Lower leg skin (tissue), 4 donors: ENCODE measurements at regions of chr3 and their contacts with region 1.

Region 1: DNA sequence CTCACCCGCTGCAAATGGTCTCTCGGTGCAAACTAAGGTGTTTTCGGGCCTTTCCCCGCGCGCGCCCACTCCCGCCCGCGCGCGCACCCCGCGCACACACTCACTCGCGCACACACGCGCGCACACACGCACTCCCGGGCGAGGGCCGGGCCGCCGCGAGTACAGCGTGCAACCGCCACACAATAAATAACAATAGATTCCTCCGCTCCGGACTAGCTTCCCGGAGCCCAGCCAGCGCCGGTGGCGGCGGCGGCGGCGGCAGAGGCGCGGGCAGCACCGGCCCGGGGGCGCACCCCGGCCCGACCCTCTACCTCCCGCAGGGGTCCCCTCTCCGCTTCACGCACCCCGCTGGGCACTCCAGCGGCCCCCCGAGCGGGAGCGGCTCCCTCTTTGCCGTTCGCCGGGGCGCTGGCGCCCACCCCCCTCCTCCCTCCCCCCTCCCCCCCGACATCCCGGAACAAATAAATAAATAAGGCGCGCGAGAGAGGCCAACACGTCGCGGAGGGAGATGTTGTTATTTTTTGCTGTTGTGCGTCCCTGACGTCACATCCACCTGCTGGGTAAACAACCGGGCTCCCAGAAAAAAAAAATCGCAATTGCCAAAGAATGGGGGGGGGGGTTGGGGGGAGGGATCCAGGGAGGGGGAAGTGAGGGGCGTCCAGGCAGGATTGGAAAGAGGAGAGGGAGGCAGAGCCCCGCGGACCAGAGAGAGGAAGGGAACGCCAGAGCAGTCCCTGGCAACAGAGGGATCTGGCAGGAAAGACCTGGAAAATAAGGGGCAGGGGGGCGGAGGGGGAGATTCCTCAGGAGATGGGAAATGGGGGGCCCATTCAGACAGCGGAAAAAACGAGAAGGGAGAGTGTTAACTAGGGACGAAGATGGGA is at the start of gene FOXP1:
- DNase-seq: peak; percentile 61 to 93
- H3K4me3 ChIP-seq: peak within 1 kb of the TSS; percentile 77
- CTCF ChIP-seq: no peak
- POLR2A ChIP-seq: no peak
- total RNA-seq, gene FOXP1: 46.6 to 66.6 (median 55.2) TPM

Region 2: DNA sequence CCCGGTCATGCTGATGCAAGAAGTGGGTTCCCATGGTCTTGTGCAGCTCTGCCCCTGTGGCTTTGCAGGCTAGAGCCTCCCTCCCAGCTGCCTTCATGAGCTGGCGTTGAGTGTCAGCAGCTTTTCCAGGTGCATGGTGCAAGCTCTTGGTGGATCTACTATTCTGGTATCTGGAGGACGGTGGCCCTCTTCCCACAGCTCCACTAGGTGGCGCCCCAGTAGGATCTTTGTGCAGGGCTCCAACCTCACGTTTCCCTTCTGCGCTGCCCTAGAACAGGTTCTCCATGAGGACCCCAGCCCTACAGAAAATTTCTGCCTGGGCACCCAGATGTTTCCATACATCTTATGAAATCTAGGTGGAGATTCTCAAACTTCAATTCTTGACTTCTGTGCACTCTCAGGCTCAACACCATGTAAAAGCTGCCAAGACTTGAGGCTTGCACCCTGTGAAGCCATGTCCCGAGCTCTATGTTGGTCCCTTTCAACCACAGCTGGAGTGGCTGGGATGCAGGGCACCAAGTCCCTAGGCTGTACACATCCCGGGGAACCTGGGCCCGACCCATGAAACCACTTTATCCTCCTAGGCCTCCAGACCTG is 1033.0 kb before region 1 on chr3:
- intact Hi-C with region 1: loop called (anchors 10 kb)
- DNase-seq: peak; percentile 60 to 93
- H3K4me3 ChIP-seq: no peak overlapping the region
- CTCF ChIP-seq: no peak
- POLR2A ChIP-seq: no peak

Region 3: DNA sequence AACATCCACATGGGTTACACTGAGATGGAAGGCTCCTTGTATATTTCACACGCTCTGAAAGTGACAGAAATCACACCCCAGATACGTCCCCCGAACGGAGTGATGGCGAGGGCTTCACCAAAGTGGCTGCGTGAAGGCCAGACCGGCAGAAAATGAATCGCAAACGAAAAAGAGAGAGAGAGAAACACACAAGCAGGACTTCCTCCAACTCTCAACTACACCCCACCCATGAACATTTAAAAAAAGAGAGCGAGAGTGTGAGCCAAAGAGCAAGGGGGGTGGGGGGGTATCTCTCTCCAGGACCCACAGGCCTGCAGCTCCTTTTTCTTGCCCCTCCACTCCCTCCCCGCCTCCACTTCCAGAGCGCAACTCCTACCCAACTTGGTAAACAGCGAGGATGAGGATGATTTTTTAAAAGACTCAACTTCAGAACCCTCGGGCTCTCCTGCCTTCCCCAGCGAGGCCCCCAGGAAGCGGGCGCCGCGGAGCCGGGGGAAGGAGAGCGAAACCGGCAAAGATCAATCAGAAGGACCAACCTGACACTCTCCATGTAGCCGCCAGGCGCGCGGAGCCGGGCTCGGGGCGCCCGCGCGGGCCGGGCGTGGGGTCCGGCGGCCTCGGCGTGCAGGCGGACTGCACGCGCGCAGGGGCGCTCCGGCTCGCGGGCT is 519.4 kb before region 1 on chr3:
- intact Hi-C with region 1: loop called (anchors 10 kb)
- DNase-seq: no peak
- H3K4me3 ChIP-seq: peak overlapping the region; percentile 56
- CTCF ChIP-seq: no peak
- POLR2A ChIP-seq: no peak

Region 4: DNA sequence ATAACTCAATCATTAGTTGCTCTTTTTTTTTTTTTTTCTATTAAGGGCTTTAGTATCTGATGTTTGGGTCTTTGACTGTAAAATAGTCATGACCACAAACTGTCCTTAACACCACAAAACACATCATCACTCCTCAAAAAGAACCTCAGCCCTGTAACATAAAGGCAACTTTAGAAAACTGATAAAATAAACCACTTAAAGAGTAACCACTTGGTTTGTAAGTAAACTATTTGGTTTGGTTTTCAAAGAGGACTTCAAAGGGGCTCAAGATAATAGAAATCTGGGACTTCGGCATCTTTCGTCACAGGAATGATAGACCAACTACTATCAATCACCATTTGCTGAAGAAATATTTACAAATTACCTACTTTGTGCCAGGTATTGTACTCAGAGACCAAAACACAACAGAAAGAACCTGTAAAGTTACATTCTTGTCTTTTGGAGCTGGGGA is 168.1 kb before region 1 on chr3:
- intact Hi-C with region 1: no loop called
- DNase-seq: no peak
- H3K4me3 ChIP-seq: no peak overlapping the region
- CTCF ChIP-seq: no peak
- POLR2A ChIP-seq: no peak

Region 5: GRCh38 chr3:71444028-71444860 is 139.6 kb before region 1 on chr3:
- intact Hi-C with region 1: loop called (anchors 10 kb)
- DNase-seq: peak in 1 of 2 donors; percentile 69
- H3K4me3 ChIP-seq: no peak overlapping the region
- CTCF ChIP-seq: no peak
- POLR2A ChIP-seq: no peak

Region 6: DNA sequence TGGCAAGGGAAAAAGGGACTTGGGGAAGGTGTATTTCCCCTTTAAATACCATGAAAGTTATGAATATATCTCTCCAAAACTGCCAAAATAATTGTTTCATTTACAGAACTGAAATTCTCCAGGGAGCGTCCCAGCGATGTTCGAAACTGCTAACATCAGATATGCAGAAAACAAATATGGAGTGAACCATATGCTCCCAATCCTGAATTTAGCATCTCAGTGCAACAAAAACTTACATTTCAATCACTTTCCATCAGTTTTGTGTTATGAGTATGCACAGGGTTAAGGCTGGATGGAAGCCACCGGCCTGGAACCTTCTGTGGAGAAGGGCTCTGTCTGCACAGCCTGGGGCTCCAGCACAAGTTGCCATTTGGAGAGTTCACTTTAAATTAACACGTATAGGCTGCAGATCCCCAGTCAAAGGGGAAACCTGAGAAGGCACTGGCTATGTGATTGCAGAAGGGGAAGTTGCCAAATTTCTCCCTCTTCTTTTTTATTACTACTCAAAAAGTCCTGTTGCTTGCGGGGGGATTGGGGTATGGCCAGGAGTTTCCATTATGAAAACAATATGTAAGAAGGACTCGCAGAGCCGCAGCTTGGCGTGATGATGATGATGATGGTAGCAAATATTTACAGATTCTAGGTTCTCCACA is 56.6 kb after region 1 on chr3:
- intact Hi-C with region 1: no loop called
- DNase-seq: peak in 1 of 2 donors; percentile 20
- H3K4me3 ChIP-seq: no peak overlapping the region
- CTCF ChIP-seq: no peak
- POLR2A ChIP-seq: no peak

Region 7: GRCh38 chr3:71690341-71690841 is 106.6 kb after region 1 on chr3:
- intact Hi-C with region 1: no loop called
- DNase-seq: no peak
- H3K4me3 ChIP-seq: no peak overlapping the region
- CTCF ChIP-seq: no peak
- POLR2A ChIP-seq: no peak

Region 8: DNA sequence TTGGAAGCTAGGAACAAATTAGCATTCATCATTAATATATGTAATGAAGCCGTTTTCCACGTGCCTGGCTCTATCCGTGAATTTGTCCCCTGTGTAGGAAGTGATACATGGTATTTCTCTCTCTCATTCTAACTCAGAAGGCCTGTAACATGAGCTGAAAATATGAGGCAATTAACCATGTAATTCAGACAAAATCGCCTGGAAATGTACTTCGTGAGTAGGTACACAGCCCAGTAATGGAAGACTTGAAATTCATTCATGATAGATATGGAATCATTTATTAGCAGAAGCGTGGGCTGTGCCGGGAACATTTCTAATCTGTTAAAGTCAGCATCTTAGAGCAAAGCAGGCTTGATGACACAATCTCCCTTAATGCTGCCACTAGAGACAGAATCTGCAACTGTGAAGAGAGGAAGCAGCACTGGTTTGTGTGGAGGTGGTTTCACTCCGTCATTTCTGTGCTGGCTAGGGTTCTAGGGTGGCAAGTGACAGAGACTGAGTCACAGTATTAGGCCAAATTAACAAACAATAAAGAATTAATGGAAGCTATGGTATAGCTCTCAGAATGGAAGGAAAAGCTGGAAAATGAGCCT is 426.1 kb after region 1 on chr3:
- intact Hi-C with region 1: no loop called
- DNase-seq: no peak
- H3K4me3 ChIP-seq: no peak overlapping the region
- CTCF ChIP-seq: no peak
- POLR2A ChIP-seq: no peak